ENCODE measurements at regions of chr7 and their contacts with region 1.

Region 1: GRCh38 chr7:66740302-66740979 is at the start of gene RABGEF1:
- DNase-seq: peak; percentile 100
- H3K4me3 Mint-ChIP-seq: peak within 1 kb of the TSS; percentile 97
- H3K27ac Mint-ChIP-seq: peak within 1 kb of the TSS; percentile 97
- H3K4me1 Mint-ChIP-seq: peaks cover 26% of the 10 kb centered on the region
- H3K27me3 Mint-ChIP-seq: no peaks in the 10 kb centered on the region
- total RNA-seq, gene RABGEF1: 23.6 and 23.8 TPM in 2 replicates

Region 2: GRCh38 chr7:66557608-66558143 is 182.8 kb before region 1 on chr7:
- intact Hi-C with region 1: loop called (anchors 1 kb)
- DNase-seq: peak; percentile 94
- H3K4me3 Mint-ChIP-seq: no peak overlapping the region
- H3K27ac Mint-ChIP-seq: no peak overlapping the region
- H3K4me1 Mint-ChIP-seq: peaks cover 3% of the 10 kb centered on the region
- H3K27me3 Mint-ChIP-seq: no peaks in the 10 kb centered on the region

Region 3: DNA sequence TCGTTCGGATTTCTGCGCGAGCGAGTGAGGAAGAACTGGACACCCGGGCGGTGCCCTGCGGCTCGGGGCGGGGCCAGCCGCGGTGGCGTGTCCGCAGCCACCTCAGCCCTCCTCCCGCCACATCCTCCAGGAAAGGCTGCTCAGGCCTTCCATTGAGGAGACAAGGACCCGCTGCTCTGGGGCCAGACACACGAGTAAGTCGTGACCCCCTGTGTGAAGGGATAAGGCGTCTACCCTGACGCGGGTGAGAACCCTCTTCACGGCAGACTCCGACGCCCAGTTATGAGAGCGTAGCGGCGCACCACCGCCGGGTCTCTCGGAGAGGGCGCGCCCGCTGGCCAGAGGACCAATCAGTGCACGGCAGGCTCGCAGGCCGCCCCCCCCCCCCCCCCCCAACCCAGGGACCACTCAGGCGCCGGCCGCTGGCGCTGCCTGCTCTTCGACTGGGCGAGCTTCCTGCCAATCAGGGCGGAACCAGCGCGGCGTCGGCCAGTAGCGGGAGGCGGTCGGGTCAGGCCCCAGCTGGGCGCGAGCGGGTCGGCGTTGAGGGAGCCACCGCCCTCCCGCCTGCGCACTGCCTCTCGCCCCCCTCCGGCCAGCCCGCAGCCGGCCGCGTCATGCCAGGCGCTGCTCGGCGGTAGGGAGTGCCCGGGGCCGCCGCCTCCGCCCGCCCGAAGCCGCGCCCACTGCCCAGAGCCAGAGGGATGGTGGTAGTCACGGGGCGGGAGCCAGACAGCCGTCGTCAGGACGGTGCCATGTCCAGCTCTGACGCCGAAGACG is 111.9 kb before region 1 on chr7 and contains the start of gene KCTD7:
- intact Hi-C with region 1: loop called (anchors 1 kb)
- DNase-seq: peak; percentile 98
- H3K4me3 Mint-ChIP-seq: peak within 1 kb of the TSS; percentile 90
- H3K27ac Mint-ChIP-seq: peak within 1 kb of the TSS; percentile 84
- H3K4me1 Mint-ChIP-seq: peaks cover 44% of the 10 kb centered on the region
- H3K27me3 Mint-ChIP-seq: no peaks in the 10 kb centered on the region
- total RNA-seq, gene KCTD7: 8.9 and 9.2 TPM in 2 replicates

Region 4: DNA sequence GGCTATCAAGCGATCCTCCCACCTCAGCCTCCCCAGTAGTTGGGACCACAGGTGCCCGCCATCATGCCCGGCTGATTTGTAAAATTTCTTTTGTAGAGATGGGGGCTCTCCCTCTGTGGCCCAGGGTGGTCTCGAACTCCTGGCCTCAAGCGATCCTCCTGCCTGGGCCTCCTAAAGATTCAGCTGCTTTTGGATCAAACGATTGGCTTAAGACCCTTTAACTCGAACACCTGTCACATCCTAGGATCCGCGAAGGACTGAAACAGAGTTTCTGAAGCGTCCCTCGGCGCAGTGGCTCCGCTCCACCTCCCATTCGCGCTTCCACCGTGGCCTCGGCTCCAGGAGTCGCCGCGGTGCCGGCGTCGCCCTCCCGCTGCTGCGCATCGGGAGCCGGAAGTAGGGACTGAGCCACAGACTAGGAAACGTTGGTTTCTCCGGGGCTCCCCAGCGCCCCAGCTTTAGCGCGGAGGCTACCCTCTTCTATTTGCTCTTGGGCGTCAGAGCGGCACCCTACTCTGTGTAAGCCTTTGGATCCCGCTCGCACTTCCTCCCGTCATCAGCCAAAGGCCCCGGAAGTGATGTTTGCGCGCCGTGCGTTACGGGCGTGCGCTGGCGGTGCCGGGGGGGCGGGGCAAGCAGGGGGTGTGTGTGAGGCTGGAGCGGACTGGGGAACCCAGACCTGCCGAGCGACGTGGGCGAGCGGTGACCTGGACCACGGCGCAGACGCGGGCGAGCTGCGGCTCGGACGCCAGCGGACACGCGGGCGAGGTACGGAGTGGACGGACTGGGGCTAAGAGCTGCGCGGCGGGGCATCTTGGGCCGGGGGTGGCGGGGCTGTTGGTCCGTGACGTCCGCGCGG is 58.7 kb before region 1 on chr7:
- intact Hi-C with region 1: loop called (anchors 2 kb)
- DNase-seq: peak; percentile 99
- H3K4me3 Mint-ChIP-seq: peak overlapping the region; percentile 93
- H3K27ac Mint-ChIP-seq: peak overlapping the region; percentile 92
- H3K4me1 Mint-ChIP-seq: peaks cover 19% of the 10 kb centered on the region
- H3K27me3 Mint-ChIP-seq: no peaks in the 10 kb centered on the region

Region 5: GRCh38 chr7:66779669-66780409 is 39.4 kb after region 1 on chr7:
- intact Hi-C with region 1: loop called (anchors 5 kb)
- DNase-seq: no peak
- H3K4me3 Mint-ChIP-seq: no peak overlapping the region
- H3K27ac Mint-ChIP-seq: peak overlapping the region; percentile 54
- H3K4me1 Mint-ChIP-seq: peaks cover 10% of the 10 kb centered on the region
- H3K27me3 Mint-ChIP-seq: no peaks in the 10 kb centered on the region

Region 6: DNA sequence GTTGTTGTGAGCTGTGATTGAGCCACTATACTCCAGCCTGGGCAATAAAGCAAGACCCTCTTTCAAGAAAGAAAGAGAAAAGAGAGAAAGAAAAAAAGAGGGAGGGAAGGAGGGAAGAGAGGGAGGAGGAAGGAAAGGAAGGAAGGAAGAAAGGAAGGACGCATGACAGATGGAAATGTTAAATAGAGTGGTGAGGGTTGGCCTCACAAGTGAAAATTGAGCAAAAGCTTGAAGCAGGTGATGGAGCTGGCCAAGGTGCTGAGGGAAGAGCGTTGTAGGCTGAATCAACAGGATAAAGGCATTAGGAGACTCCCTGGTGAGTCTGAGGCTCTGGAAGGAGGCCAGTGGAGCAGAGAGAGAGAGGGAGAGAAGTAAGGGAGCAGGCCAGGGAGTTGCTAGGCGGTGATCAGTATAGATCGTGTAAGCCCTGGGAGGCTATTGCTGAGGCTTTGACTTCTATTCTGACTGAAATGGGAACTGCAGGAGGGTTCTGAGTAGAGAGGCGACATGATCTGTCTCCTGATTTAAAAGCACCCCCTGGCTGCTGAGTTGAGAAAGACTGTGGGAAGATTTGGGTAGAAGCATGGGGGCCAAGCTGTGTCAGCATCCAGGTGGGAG is 154.1 kb after region 1 on chr7:
- intact Hi-C with region 1: no loop called
- DNase-seq: peak; percentile 62
- H3K4me3 Mint-ChIP-seq: no peak overlapping the region
- H3K27ac Mint-ChIP-seq: no peak overlapping the region
- H3K4me1 Mint-ChIP-seq: no peaks in the 10 kb centered on the region
- H3K27me3 Mint-ChIP-seq: no peaks in the 10 kb centered on the region

Region 7: DNA sequence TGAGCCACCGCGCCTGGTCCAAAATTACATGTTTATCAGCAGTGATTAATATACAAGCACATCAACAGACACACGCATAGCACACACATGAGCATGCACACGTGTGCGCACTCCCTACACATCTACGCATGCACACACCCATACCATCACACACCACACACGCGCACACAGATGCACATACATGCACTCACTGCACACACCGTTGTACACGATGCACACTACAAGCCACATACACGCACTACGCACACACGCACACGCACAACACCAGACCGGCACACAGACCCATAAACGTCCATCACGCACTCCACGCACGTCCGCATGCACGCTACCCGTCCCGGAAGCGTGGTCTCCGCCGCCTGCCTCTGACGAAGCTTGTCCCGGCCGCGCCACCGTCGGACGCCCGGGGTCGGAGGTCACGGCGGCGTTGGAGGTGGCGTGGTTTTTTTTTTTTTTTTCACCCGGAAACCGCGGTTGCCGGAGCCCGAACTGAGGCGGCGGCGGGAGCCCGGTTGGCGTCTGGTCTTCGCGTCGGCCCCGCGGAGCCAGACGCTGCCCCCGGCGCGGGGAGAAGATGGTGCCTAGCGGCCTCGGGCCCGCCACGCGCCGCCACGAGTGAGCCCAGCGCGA is 180.4 kb after region 1 on chr7 and contains the start of gene TMEM248:
- intact Hi-C with region 1: loop called (anchors 2 kb)
- DNase-seq: peak; percentile 98
- H3K4me3 Mint-ChIP-seq: peak within 1 kb of the TSS; percentile 97
- H3K27ac Mint-ChIP-seq: peak within 1 kb of the TSS; percentile 98
- H3K4me1 Mint-ChIP-seq: peaks cover 21% of the 10 kb centered on the region
- H3K27me3 Mint-ChIP-seq: no peaks in the 10 kb centered on the region
- total RNA-seq, gene TMEM248: 88.4 and 92.2 TPM in 2 replicates